ENCODE measurements at regions of chr1 and their contacts with region 1.

Region 1: DNA sequence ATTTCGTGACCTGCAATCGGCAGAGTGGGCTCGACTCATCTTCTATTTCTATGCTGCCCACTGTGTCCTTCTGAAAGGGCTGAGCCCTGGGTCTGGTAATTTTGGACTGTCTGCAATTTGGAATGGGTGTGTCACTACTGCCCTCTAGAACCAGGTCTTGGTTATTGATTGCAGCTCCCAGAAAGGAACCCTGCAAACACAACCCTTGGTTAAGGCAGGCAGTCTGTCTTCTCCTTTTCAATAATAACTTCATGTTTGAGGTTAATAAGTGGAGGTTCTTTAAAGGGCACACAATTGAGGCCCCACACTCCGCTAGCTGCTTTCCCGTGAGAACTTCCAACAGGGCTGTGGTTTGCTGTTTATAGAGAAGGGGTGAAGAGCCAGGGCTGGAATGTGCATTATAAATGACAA is 79.9 kb upstream of the LYST start:
- DNase-seq: no peak
- ATAC-seq: peak; percentile 51 to 76; a peak in 4 of 6 replicates
- H3K4me3 ChIP-seq: no peak overlapping the region
- H3K27ac ChIP-seq: no peak overlapping the region
- H3K4me1 ChIP-seq: no peaks in the 10 kb centered on the region
- CTCF ChIP-seq: peak; percentile 42
- EP300 ChIP-seq: no peak
- POLR2A ChIP-seq: no peak
- RAD21 ChIP-seq: peak; percentile 67 to 74

Region 2: GRCh38 chr1:235960809-235961208 is 14.2 kb after region 1 on chr1:
- CTCF ChIA-PET with region 1: interaction called, 10 read pairs
- POLR2A ChIA-PET with region 1: no interaction called
- DNase-seq: no peak
- ATAC-seq: no peak
- H3K4me3 ChIP-seq: no peak overlapping the region
- H3K27ac ChIP-seq: no peak overlapping the region
- H3K4me1 ChIP-seq: no peaks in the 10 kb centered on the region
- CTCF ChIP-seq: no peak
- EP300 ChIP-seq: no peak
- POLR2A ChIP-seq: no peak
- RAD21 ChIP-seq: no peak

Measured in A549 (cell line).